PC-3 (cell line): ENCODE measurements at regions of chr2 and their contacts with region 1.

Region 1: GRCh38 chr2:118865106-118865505 is 17.7 kb upstream of the EN1 start:
- DNase-seq: peak; percentile 79
- ATAC-seq: peak; percentile 98
- H3K4me3 ChIP-seq: no peak overlapping the region
- H3K27ac ChIP-seq: no peak overlapping the region
- H3K4me1 ChIP-seq: peaks cover 16% of the 10 kb centered on the region
- H3K27me3 ChIP-seq: no peaks in the 10 kb centered on the region
- CTCF ChIP-seq: peak; percentile 84

Region 2: GRCh38 chr2:118202707-118203303 is 662.3 kb before region 1 on chr2:
- CTCF ChIA-PET with region 1: no interaction called
- POLR2A ChIA-PET with region 1: no interaction called
- intact Hi-C with region 1: loop called (anchors 5 kb)
- DNase-seq: peak; percentile 61
- ATAC-seq: peak; percentile 74
- H3K4me3 ChIP-seq: no peak overlapping the region
- H3K27ac ChIP-seq: no peak overlapping the region
- H3K4me1 ChIP-seq: no peaks in the 10 kb centered on the region
- H3K27me3 ChIP-seq: no peaks in the 10 kb centered on the region
- CTCF ChIP-seq: peak; percentile 81

Region 3: DNA sequence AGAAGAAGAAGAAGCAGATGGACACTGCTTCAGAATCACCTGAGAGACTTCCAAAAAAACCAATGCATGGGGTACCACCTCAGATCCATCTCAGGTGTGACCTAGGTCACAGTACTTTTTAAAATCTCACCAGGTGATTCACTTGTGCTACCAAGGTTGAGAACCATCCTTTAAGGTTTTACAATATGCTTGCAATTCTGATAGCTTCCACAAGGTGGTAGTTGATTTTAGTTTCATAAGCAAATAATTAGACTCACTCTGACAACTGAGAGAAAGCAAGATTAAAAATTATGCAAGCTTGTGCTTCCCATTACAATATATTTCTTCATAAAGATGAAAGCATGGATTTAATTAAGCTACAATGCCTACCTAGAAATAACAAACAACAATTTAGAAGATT is 372.8 kb before region 1 on chr2:
- CTCF ChIA-PET with region 1: no interaction called
- POLR2A ChIA-PET with region 1: no interaction called
- intact Hi-C with region 1: loop called (anchors 2 kb)
- DNase-seq: peak; percentile 77
- ATAC-seq: peak; percentile 37; the same call in 1 of the 2 replicates
- H3K4me3 ChIP-seq: no peak overlapping the region
- H3K27ac ChIP-seq: no peak overlapping the region
- H3K4me1 ChIP-seq: no peaks in the 10 kb centered on the region
- H3K27me3 ChIP-seq: no peaks in the 10 kb centered on the region; the same call in 1 of the 2 replicates
- CTCF ChIP-seq: peak; percentile 69